Motor neuron (in vitro differentiated cells): ENCODE measurements at regions of chr20 and their contacts with region 1.

Region 1: GRCh38 chr20:58692594-58693226 is at the start of gene NPEPL1:
- ATAC-seq: peak; percentile 61 to 92 (median 82)
- H3K4me3 ChIP-seq: peak within 1 kb of the TSS in 1 of 5 donors; percentile 19
- H3K27ac ChIP-seq: no peak within 1 kb of the TSS
- H3K4me1 ChIP-seq: peaks cover 12 to 18% of the 10 kb centered on the region in 2 donors
- total RNA-seq, gene NPEPL1: 5.4 to 31.1 (median 14.0) TPM

Region 2: GRCh38 chr20:58127701-58128111 is 565.0 kb before region 1 on chr20:
- in situ Hi-C with region 1: no loop called
- ATAC-seq: peak in 3 of 8 experiments; percentile 15 to 83 (median 72)
- H3K4me3 ChIP-seq: no peak overlapping the region
- H3K27ac ChIP-seq: no peak overlapping the region
- H3K4me1 ChIP-seq: peaks cover 4 to 39% of the 10 kb centered on the region in 2 donors

Region 3: DNA sequence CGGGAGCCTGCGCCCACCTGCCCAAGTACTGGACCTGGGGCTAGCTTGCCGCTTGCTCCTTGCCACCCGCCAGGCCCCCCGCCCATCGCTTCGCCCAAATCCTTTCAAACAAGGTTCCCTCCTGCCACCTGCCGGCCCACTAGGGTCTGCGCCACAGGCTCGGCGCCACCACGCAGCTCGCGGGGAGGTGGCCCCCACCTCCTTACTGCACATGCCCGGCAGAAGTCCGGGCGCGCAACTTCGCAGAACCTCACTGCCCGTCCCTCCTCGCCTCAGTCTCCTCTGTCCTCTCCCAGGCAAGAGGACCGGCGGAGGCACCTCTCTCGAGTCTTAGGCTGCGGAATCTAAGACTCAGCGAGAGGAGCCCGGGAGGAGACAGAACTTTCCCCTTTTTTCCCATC is 146.8 kb after region 1 on chr20:
- in situ Hi-C with region 1: loop called in 1 of 9 experiments (anchors 25 kb)
- ATAC-seq: peak in 7 of 8 experiments; percentile 65 to 88 (median 78)
- H3K4me3 ChIP-seq: peak overlapping the region in 4 of 5 donors; percentile 6 to 24 (median 20)
- H3K27ac ChIP-seq: no peak overlapping the region
- H3K4me1 ChIP-seq: peaks cover 0 to 10% of the 10 kb centered on the region in 2 donors